ENCODE measurements at regions of chr2 and their contacts with region 1.

Region 1: DNA sequence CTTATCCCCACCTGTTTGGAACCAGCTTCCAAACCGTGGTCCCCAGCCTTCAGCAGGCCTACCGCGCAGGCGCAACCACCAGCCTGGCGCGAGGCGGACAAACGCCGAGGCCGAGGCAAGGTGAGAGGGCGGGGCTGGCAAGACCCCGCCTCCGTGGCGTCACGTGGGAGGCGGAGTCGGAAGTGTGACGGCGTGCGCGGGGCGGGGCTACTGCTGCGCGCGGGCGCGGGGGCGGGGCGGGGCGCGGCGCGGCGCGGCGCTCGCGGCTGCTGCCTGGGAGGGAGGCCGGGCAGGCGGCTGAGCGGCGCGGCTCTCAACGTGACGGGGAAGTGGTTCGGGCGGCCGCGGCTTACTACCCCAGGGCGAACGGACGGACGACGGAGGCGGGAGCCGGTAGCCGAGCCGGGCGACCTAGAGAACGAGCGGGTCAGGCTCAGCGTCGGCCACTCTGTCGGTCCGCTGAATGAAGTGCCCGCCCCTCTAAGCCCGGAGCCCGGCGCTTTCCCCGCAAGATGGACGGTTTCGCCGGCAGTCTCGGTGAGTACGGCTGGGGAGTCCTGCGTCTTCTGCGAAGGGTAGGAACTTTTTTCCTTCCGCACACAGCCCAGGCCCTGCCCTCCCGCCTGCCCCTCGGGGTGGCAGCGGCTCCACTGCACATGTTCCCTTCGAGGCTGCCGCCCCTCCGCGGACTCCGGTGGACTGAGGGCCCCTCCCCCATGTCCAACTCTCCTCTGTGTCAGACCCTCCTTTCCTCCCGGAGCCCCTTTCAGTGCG is at the start of gene EML4:
- DNase-seq: peak; percentile 52
- ATAC-seq: peak; percentile 79
- H3K4me3 ChIP-seq: peak within 1 kb of the TSS; percentile 92
- H3K27ac ChIP-seq: peak within 1 kb of the TSS; percentile 82
- H3K4me1 ChIP-seq: peaks cover 3% of the 10 kb centered on the region
- H3K27me3 ChIP-seq: no peaks in the 10 kb centered on the region
- CTCF ChIP-seq: no peak
- EP300 ChIP-seq: no peak
- POLR2A ChIP-seq: peak; percentile 92
- RAD21 ChIP-seq: no peak
- polyA plus RNA-seq, gene EML4: 23.1 to 30.8 TPM

Region 2: DNA sequence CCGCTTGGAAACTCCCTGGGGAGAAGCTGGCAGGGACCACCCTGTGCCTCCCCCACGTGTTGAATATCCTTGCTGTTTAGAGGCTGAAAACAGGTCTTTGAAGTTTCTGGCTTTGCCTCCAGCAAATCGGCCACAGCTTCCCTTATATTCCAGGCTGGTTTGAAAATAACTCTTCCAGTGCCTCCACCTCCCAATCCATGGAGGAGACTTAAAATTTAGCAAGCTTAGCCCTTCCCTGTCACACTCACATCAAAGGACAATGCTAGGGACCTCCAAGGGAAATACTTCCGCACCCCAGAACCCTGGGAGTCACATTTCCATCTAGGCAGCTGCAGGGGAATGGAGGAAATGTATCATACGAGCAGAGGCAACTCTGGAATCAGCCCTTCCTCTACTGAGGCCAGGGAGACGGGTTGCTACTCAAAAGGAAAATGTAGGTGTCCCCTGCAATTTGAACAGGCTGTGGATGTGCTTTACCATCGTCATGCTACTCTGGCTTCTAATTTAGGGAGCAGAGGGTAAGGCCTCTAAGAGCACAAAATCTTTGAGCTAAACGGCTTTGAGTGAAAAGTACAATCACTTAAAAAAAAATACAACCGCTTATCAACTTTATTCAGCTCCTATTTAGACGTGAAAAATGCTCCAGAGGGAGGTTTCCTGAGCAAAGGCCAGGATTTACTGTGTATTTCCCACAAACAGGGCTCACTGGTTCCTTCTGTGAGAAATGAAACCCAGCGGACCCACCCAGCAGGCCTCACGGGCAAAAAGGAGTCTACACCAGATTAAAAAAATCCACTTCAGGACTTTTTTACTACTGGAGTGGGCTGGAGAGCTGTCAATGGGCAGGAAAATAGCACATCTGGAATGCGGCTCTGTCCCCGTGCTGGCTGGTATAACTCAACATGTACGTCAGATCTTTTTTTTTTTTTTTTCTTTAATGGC is 170.8 kb before region 1 on chr2:
- CTCF ChIA-PET with region 1: no interaction called
- POLR2A ChIA-PET with region 1: no interaction called
- RAD21 ChIA-PET with region 1: no interaction called
- SMC1A ChIA-PET with region 1: no interaction called
- in situ Hi-C with region 1: no loop called
- intact Hi-C with region 1: no loop called
- DNase-seq: no peak
- ATAC-seq: no peak
- H3K4me3 ChIP-seq: no peak overlapping the region
- H3K27ac ChIP-seq: no peak overlapping the region
- H3K4me1 ChIP-seq: no peaks in the 10 kb centered on the region
- H3K27me3 ChIP-seq: no peaks in the 10 kb centered on the region; a peak in 2 of 4 replicates
- CTCF ChIP-seq: no peak
- EP300 ChIP-seq: no peak
- POLR2A ChIP-seq: no peak
- RAD21 ChIP-seq: no peak

Region 3: DNA sequence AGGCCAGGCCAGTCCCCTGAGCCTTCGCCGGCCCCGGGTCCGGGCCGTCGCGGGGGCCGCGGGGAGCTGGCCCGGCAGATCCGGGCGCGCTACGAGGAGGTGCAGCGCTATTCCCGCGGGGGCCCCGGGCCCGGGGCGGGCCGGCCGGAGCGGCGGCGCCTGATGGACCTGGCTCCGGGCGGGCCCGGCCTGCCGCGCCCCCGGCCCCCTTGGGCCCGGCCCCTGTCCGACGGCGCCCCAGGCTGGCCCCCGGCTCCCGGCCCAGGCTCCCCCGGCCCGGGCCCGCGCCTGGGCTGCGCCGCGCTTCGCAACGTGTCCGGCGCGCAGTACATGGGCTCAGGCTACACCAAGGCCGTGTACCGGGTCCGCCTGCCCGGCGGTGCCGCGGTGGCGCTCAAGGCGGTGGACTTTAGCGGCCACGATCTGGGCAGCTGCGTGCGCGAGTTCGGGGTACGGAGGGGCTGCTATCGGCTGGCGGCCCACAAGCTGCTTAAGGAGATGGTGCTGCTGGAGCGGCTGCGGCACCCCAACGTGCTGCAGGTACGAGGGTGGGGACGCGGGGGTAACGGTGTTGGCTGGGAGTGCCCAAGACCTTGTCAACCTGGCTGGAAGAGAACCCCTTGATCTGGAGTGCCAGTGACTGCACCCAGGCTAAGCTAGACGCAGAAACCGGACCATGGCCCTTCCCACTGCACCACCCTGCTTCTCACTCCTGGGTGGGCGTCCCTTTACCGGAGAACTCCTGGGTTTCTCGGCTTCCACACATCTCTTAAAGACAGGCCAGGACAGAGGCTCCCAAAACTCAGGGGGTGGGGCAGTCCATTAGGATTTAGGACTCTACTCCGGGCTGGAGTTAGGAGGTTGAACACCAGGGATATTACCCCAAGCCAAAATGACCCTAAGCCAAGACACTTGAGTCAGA is 120.7 kb before region 1 on chr2:
- CTCF ChIA-PET with region 1: no interaction called
- POLR2A ChIA-PET with region 1: no interaction called
- RAD21 ChIA-PET with region 1: no interaction called
- SMC1A ChIA-PET with region 1: no interaction called
- in situ Hi-C with region 1: no loop called
- intact Hi-C with region 1: no loop called
- DNase-seq: no peak
- ATAC-seq: no peak
- H3K4me3 ChIP-seq: no peak overlapping the region
- H3K27ac ChIP-seq: no peak overlapping the region
- H3K4me1 ChIP-seq: no peaks in the 10 kb centered on the region
- H3K27me3 ChIP-seq: peaks cover 13 to 15% of the 10 kb centered on the region in 2 experiments
- CTCF ChIP-seq: no peak
- EP300 ChIP-seq: no peak
- POLR2A ChIP-seq: no peak
- RAD21 ChIP-seq: no peak

Region 4: DNA sequence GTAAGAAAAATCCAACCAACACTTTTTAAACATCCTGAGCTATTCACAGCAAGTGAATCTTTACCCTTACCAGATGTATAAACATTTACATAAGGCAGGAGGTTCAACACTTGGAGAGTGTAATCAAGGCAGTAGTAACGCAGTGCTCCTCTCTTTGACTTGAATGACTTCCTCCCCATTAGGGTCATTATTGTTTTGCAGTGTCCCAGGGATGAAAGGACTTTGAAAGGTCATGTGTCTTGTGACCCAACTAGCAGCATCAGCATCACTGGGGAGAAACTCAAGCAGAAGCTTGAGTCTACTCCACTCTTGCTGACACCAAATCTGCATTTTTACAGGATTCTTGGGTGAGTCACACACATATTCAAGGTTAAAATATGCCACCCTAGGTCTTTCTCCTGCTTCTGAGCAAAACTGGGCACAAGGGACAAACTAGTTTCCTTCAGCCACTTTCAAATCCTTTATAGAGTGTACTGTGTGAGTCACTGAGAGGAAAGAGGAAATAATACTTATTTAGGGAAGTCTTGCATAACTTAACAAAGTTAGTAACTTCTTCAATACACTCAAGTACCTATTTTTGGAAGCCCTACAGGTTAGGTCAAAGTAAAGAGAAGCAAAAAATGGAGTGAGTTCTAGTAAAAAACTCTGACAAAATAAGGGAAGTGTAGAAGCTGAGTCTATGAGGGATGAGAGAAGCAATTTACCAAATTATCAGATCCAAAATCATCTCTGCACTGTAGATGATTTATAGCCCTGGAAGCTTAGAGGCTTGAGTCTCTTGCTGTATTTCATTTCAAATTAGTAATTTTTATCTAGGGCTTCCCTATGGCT is 51.1 kb before region 1 on chr2:
- CTCF ChIA-PET with region 1: interaction called, 4 read pairs
- POLR2A ChIA-PET with region 1: interaction called, 6 read pairs
- RAD21 ChIA-PET with region 1: interaction called, 4 read pairs
- SMC1A ChIA-PET with region 1: interaction called, 13 read pairs
- in situ Hi-C with region 1: no loop called
- intact Hi-C with region 1: no loop called
- DNase-seq: peak; percentile 56
- ATAC-seq: peak; percentile 91
- H3K4me3 ChIP-seq: peak overlapping the region; percentile 13; the same call in 1 of the 2 replicates
- H3K27ac ChIP-seq: peak overlapping the region; percentile 50
- H3K4me1 ChIP-seq: peaks cover 18% of the 10 kb centered on the region
- H3K27me3 ChIP-seq: no peaks in the 10 kb centered on the region
- CTCF ChIP-seq: no peak
- EP300 ChIP-seq: no peak; a peak in 1 of 4 replicates
- POLR2A ChIP-seq: no peak
- RAD21 ChIP-seq: no peak

Region 5: GRCh38 chr2:42132966-42133641 is 36.2 kb before region 1 on chr2:
- CTCF ChIA-PET with region 1: interaction called, 10 read pairs
- POLR2A ChIA-PET with region 1: interaction called, 45 read pairs
- RAD21 ChIA-PET with region 1: interaction called, 41 read pairs
- SMC1A ChIA-PET with region 1: interaction called, 63 read pairs
- in situ Hi-C with region 1: no loop called
- intact Hi-C with region 1: loop called (anchors 2 kb)
- DNase-seq: peak; percentile 65
- ATAC-seq: peak; percentile 85
- H3K4me3 ChIP-seq: peak overlapping the region; percentile 18; the same call in 1 of the 2 replicates
- H3K27ac ChIP-seq: peak overlapping the region; percentile 9
- H3K4me1 ChIP-seq: peaks cover 50% of the 10 kb centered on the region
- H3K27me3 ChIP-seq: no peaks in the 10 kb centered on the region
- CTCF ChIP-seq: no peak
- EP300 ChIP-seq: no peak
- POLR2A ChIP-seq: peak; percentile 75
- RAD21 ChIP-seq: peak; percentile 11; the same call in 1 of the 2 replicates

Region 6: DNA sequence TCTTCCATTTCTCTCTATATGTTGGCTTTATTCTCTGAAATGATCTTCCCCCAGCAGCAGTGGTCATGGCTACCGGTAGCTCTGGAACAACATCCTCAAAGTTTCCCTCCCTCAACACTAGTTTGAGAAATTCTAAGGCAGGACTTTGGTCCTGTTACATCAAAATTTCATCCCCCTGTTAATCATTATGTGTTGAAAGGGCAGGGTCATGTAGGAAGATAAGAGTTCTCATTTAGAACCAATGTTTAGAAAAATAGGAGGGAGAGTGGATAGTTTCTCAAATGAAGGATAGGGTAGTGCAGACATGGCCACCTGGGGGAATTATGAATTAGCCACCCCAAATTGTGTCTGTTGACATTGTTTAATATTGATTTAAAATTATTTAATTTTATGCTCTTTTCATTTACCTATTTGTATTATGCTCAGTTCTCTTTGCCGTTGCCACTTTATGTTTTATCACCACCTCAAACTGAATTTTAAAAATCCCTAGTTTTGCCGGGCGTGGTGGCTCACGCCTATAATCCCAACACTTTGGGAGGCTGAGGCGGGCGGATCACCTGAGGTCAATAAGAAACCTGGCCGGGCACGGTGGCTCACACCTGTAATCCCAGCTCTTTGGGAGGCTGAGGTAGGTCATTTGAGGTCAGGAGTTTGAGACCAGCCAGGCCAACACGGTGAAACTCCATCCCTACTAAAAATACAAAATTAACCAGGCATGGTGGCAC is 22.2 kb after region 1 on chr2:
- CTCF ChIA-PET with region 1: interaction called, 34 read pairs
- POLR2A ChIA-PET with region 1: interaction called, 11 read pairs
- RAD21 ChIA-PET with region 1: interaction called, 32 read pairs
- SMC1A ChIA-PET with region 1: interaction called, 42 read pairs
- in situ Hi-C with region 1: no loop called
- intact Hi-C with region 1: loop called (anchors 2 kb)
- DNase-seq: no peak
- ATAC-seq: no peak
- H3K4me3 ChIP-seq: no peak overlapping the region
- H3K27ac ChIP-seq: no peak overlapping the region
- H3K4me1 ChIP-seq: peaks cover 11% of the 10 kb centered on the region; the same call in 1 of the 2 replicates
- H3K27me3 ChIP-seq: no peaks in the 10 kb centered on the region
- CTCF ChIP-seq: no peak
- EP300 ChIP-seq: no peak
- POLR2A ChIP-seq: no peak
- RAD21 ChIP-seq: no peak

Region 7: GRCh38 chr2:42216712-42217111 is 47.4 kb after region 1 on chr2:
- CTCF ChIA-PET with region 1: interaction called, 3 read pairs
- POLR2A ChIA-PET with region 1: no interaction called
- RAD21 ChIA-PET with region 1: interaction called, 8 read pairs
- SMC1A ChIA-PET with region 1: interaction called, 12 read pairs
- in situ Hi-C with region 1: no loop called
- intact Hi-C with region 1: no loop called
- DNase-seq: no peak
- ATAC-seq: no peak
- H3K4me3 ChIP-seq: no peak overlapping the region
- H3K27ac ChIP-seq: no peak overlapping the region
- H3K4me1 ChIP-seq: no peaks in the 10 kb centered on the region
- H3K27me3 ChIP-seq: no peaks in the 10 kb centered on the region
- CTCF ChIP-seq: no peak
- EP300 ChIP-seq: no peak
- POLR2A ChIP-seq: no peak
- RAD21 ChIP-seq: no peak

Region 8: DNA sequence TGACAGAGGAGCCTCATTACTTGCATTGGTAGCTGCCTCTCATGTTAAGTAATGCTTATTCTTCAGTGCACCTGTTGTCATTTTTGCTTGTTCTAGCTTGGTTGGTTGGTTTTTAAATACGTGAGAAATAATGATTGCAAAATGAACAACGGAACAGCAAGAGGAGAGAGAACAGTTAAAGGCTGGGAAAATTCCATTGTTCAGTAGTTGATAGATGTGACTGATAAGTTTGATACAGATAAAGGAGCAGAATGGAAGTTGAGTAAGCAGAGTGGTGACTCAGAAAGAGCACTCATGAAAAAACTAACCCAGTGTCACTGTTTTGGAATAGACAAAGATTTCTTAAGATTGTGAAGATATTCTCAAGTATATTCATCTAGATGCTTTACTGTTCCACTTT is 449.7 kb after region 1 on chr2:
- CTCF ChIA-PET with region 1: no interaction called
- POLR2A ChIA-PET with region 1: no interaction called
- RAD21 ChIA-PET with region 1: no interaction called
- SMC1A ChIA-PET with region 1: no interaction called
- in situ Hi-C with region 1: no loop called
- intact Hi-C with region 1: no loop called
- DNase-seq: no peak
- ATAC-seq: no peak
- H3K4me3 ChIP-seq: no peak overlapping the region
- H3K27ac ChIP-seq: no peak overlapping the region
- H3K4me1 ChIP-seq: no peaks in the 10 kb centered on the region
- H3K27me3 ChIP-seq: no peaks in the 10 kb centered on the region
- CTCF ChIP-seq: no peak
- EP300 ChIP-seq: no peak
- POLR2A ChIP-seq: no peak
- RAD21 ChIP-seq: no peak

Region 9: GRCh38 chr2:42693013-42693615 is 523.8 kb after region 1 on chr2:
- CTCF ChIA-PET with region 1: no interaction called
- POLR2A ChIA-PET with region 1: no interaction called
- RAD21 ChIA-PET with region 1: no interaction called
- SMC1A ChIA-PET with region 1: no interaction called
- in situ Hi-C with region 1: no loop called
- intact Hi-C with region 1: no loop called
- DNase-seq: no peak
- ATAC-seq: no peak
- H3K4me3 ChIP-seq: no peak overlapping the region
- H3K27ac ChIP-seq: no peak overlapping the region
- H3K4me1 ChIP-seq: no peaks in the 10 kb centered on the region; the same call in 1 of the 2 replicates
- H3K27me3 ChIP-seq: no peaks in the 10 kb centered on the region
- CTCF ChIP-seq: no peak
- EP300 ChIP-seq: no peak
- POLR2A ChIP-seq: no peak
- RAD21 ChIP-seq: no peak